Left lung (tissue), 14 donors: ENCODE measurements at regions of chr21 and their contacts with region 1.

Region 1: GRCh38 chr21:17611414-17612022 is 1.2 kb downstream of the BTG3 start:
- DNase-seq: peak; percentile 86 to 94 (median 88)
- ATAC-seq: peak; percentile 57
- H3K4me3 ChIP-seq: peak overlapping the region; percentile 63 to 79
- H3K27ac ChIP-seq: peak overlapping the region; percentile 91 to 97
- H3K4me1 ChIP-seq: peaks cover 5 to 20% of the 10 kb centered on the region in 2 donors
- H3K27me3 ChIP-seq: no peaks in the 10 kb centered on the region
- CTCF ChIP-seq: no peak

Region 2: GRCh38 chr21:17819877-17820229 is 208.3 kb after region 1 on chr21:
- intact Hi-C with region 1: loop called in 1 of 2 experiments (anchors 10 kb)
- DNase-seq: no peak
- ATAC-seq: peak; percentile 59
- H3K4me3 ChIP-seq: peak overlapping the region; percentile 89 to 92
- H3K27ac ChIP-seq: peak overlapping the region; percentile 91 to 94
- H3K4me1 ChIP-seq: peaks cover 5 to 26% of the 10 kb centered on the region in 2 donors
- H3K27me3 ChIP-seq: no peaks in the 10 kb centered on the region
- CTCF ChIP-seq: no peak